ENCODE measurements at regions of chr10 and their contacts with region 1.

Region 1: GRCh38 chr10:17617031-17617911 is at the start of gene HACD1:
- DNase-seq: peak; percentile 68 to 81
- ATAC-seq: peak; percentile 76 to 84 (median 82)
- H3K4me3 ChIP-seq: peak within 1 kb of the TSS; percentile 98
- H3K27ac ChIP-seq: peak within 1 kb of the TSS; percentile 99
- H3K4me1 ChIP-seq: no peaks in the 10 kb centered on the region
- H3K27me3 ChIP-seq: peaks cover 0 to 2% (median 0%) of the 10 kb centered on the region in 3 donors
- CTCF ChIP-seq: peak; percentile 2
- total RNA-seq, gene HACD1: 35.7 to 61.8 (median 38.9) TPM

Region 2: DNA sequence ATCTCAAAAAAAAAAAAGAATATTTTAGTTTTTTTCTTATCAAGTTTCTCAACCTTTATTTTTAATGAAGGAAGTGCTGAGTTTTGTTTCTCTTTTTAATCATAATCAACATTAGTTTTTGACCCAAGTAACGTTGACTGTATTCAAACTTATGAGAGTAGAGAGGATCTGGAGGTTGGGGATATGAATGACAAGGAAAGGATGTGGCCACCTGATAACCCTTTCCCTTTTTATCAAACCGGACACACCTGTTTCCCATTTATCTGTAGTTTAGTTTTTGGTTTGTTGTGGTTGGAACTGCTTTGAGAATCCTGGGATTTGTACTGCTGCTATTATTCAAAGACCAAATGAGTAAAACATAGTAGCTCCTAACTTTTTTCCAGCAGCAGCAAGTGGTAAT is 38.7 kb before region 1 on chr10:
- intact Hi-C with region 1: no loop called
- DNase-seq: no peak
- ATAC-seq: no peak
- H3K4me3 ChIP-seq: no peak overlapping the region
- H3K27ac ChIP-seq: no peak overlapping the region
- H3K4me1 ChIP-seq: no peaks in the 10 kb centered on the region
- H3K27me3 ChIP-seq: no peaks in the 10 kb centered on the region
- CTCF ChIP-seq: no peak

Region 3: DNA sequence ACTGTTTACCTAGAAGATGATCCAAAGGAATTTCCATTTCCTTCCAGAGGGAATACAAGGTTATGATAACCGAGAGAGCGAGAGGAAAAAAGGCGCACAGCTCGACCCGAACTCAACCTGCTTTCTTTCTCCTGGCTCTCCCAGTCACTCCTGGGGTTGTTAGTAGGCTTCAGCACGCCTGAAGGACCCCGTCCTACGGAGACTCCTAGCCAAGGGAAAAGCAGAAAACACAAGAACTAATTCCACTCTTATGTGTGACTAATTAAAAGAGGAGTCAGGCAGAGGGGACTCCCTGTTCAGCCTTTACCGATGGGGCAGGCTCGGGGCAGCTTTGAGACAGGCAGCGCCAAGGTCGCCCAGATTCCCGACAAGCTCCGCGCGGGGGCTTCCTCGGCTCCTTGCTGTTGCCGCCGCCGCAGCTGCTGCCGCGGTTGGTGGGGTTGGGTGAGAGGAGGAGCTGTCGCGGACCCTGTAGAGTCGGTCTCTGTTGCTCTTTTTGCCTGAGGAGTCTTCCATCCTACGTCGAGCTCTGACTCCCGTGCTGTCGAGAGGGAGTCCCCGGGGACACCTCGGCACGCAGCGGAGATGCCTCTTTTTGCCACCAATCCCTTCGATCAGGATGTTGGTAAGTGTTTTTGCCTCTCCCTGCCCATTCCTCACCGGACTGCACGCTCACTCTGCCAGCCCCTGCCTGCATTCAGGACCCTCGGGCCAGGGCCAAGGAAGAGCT is 26.6 kb after region 1 on chr10 and contains the start of gene STAM:
- intact Hi-C with region 1: loop called (anchors 2 kb)
- DNase-seq: peak; percentile 92 to 96
- ATAC-seq: peak; percentile 88 to 92 (median 90)
- H3K4me3 ChIP-seq: peak within 1 kb of the TSS; percentile 90
- H3K27ac ChIP-seq: peak within 1 kb of the TSS; percentile 99
- H3K4me1 ChIP-seq: peaks cover 33% of the 10 kb centered on the region
- H3K27me3 ChIP-seq: no peaks in the 10 kb centered on the region
- CTCF ChIP-seq: no peak
- total RNA-seq, gene STAM: 22.1 to 42.4 (median 36.1) TPM

Region 4: DNA sequence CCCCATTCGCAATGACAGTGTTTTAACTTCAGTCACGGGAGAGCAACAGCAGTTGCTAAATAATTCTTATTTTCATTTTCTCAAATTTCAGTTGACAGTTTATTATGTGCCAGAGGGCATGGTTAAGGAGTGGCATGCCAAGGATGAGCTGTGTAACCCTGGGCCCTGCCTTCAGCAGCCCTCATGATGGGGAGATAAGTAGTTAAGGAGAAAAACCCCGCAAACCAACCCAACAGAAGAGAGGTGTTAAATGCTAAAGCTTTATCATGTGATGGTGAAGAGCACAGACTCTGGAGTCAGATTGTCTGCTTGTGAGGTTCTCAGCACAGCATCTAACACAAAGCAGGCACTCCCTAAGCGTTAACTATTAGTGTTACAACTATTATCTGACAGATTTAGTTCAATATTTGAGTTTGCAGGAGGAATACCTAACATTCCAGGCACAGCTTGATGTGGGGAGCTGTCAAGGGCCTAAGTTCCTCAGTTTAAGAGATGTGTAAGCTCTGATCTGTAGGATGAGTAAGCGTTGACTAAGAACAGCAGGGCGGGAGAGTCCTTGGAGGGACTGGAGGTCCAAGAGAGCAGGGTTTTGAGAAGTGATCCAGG is 56.3 kb after region 1 on chr10:
- intact Hi-C with region 1: loop called (anchors 5 to 10 kb)
- DNase-seq: no peak
- ATAC-seq: peak; percentile 58 to 67 (median 62)
- H3K4me3 ChIP-seq: no peak overlapping the region
- H3K27ac ChIP-seq: peak overlapping the region; percentile 78
- H3K4me1 ChIP-seq: peaks cover 56% of the 10 kb centered on the region
- H3K27me3 ChIP-seq: no peaks in the 10 kb centered on the region
- CTCF ChIP-seq: no peak

Region 5: GRCh38 chr10:17703706-17704105 is 86.4 kb after region 1 on chr10:
- intact Hi-C with region 1: no loop called
- DNase-seq: no peak
- ATAC-seq: peak in 2 of 4 donors; percentile 40 to 45
- H3K4me3 ChIP-seq: no peak overlapping the region
- H3K27ac ChIP-seq: no peak overlapping the region
- H3K4me1 ChIP-seq: no peaks in the 10 kb centered on the region
- H3K27me3 ChIP-seq: no peaks in the 10 kb centered on the region
- CTCF ChIP-seq: no peak